Activated B cell treated with CpG ODN at 0.5 μM for 24 hours (primary cell): ENCODE measurements at regions of chr22 and their contacts with region 1.

Region 1: DNA sequence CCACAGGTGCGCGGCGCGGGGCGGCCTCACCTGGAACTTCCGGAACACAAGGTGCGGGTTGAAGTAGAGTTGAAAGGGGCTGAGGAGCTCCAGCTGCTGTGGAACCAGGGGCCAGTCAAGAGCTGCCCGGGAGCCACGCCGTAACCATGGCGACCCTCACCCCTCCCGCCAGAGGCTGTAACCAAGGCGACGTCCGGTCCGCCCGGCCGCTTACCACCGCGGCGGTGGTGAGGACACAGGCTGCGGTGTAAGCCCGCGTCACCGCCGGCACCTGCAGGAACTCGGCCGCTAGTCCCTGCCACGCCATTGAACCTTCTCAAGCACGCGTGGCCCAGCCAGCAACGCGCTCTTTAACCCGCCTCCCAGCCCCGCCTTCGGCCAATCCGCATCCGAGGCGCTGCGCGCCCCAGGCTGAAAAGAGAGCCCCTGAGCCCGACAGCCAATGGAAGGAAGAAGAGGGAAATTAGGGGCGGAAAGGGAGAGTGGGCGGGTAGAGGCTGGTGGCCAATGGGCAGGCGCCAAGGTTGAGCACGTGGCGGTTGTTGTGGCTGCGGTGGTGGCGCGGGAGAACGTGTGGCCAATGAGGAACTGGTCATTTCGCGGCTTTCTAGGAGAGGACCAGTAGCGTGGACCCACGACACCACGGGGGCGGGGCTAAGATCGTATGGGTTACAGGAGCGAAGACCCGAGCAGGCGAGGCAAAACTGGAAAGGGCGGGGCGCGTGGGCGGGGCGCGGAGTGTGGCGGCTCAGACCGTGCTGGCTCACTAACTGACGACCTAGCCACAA is at the start of gene DERL3:
- DNase-seq: peak; percentile 95
- ATAC-seq: peak; percentile 82
- H3K4me3 Mint-ChIP-seq: peak within 1 kb of the TSS; percentile 88
- H3K27ac Mint-ChIP-seq: peak within 1 kb of the TSS; percentile 95
- H3K4me1 Mint-ChIP-seq: peaks cover 75% of the 10 kb centered on the region
- H3K27me3 Mint-ChIP-seq: no peaks in the 10 kb centered on the region
- CTCF ChIP-seq: no peak
- total RNA-seq, gene DERL3: 15.4 and 18.3 TPM in 2 replicates

Region 2: GRCh38 chr22:23696326-23696851 is 142.5 kb before region 1 on chr22:
- CTCF ChIA-PET with region 1: no interaction called
- POLR2A ChIA-PET with region 1: no interaction called
- intact Hi-C with region 1: loop called (anchors 2 kb)
- DNase-seq: peak; percentile 52
- ATAC-seq: peak; percentile 99
- H3K4me3 Mint-ChIP-seq: peak overlapping the region; percentile 75
- H3K27ac Mint-ChIP-seq: peak overlapping the region; percentile 95
- H3K4me1 Mint-ChIP-seq: peaks cover 27% of the 10 kb centered on the region
- H3K27me3 Mint-ChIP-seq: no peaks in the 10 kb centered on the region
- CTCF ChIP-seq: no peak

Region 3: DNA sequence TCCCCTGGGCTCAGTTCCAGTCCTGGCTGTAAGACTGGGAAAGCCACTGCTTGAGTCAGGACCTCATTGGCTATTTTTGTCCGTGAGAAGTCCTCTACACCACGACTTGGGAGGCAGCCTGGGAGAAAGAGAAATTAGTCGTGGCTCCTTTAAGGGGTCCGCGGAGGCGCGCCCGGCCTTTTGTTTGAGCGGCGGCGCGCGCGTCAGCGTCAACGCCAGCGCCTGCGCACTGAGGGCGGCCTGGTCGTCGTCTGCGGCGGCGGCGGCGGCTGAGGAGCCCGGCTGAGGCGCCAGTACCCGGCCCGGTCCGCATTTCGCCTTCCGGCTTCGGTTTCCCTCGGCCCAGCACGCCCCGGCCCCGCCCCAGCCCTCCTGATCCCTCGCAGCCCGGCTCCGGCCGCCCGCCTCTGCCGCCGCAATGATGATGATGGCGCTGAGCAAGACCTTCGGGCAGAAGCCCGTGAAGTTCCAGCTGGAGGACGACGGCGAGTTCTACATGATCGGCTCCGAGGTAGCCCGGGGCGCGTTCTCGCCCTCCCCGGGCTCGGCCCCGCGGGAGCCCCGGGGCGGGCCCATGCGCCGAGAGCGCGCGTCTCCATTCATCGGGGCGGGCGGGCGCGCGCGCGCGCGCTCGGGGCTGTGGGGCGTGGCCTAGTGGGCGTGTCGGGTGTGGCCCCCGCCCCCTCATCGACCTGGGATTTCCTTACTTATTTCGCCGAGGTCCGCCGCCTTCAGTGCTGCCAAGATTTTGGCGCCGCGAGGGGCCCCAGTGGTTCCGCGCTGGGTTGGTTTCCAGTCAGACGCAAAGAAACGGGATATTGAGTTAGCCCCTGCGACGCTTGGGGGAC is 51.9 kb before region 1 on chr22 and contains the start of gene SMARCB1:
- CTCF ChIA-PET with region 1: no interaction called
- POLR2A ChIA-PET with region 1: interaction called, 6 read pairs
- intact Hi-C with region 1: loop called (anchors 1 kb)
- DNase-seq: peak; percentile 89
- ATAC-seq: peak; percentile 85
- H3K4me3 Mint-ChIP-seq: peak within 1 kb of the TSS; percentile 90
- H3K27ac Mint-ChIP-seq: peak within 1 kb of the TSS; percentile 88
- H3K4me1 Mint-ChIP-seq: peaks cover 51% of the 10 kb centered on the region
- H3K27me3 Mint-ChIP-seq: no peaks in the 10 kb centered on the region
- CTCF ChIP-seq: no peak
- total RNA-seq, gene SMARCB1: 156 and 161 TPM in 2 replicates

Region 4: GRCh38 chr22:23820748-23821211 is 18.1 kb before region 1 on chr22:
- CTCF ChIA-PET with region 1: no interaction called
- POLR2A ChIA-PET with region 1: interaction called, 3 read pairs
- intact Hi-C with region 1: loop called (anchors 2 kb)
- DNase-seq: no peak
- ATAC-seq: peak; percentile 49
- H3K4me3 Mint-ChIP-seq: peak overlapping the region; percentile 58
- H3K27ac Mint-ChIP-seq: peak overlapping the region; percentile 83
- H3K4me1 Mint-ChIP-seq: peaks cover 59% of the 10 kb centered on the region
- H3K27me3 Mint-ChIP-seq: no peaks in the 10 kb centered on the region
- CTCF ChIP-seq: no peak

Region 5: DNA sequence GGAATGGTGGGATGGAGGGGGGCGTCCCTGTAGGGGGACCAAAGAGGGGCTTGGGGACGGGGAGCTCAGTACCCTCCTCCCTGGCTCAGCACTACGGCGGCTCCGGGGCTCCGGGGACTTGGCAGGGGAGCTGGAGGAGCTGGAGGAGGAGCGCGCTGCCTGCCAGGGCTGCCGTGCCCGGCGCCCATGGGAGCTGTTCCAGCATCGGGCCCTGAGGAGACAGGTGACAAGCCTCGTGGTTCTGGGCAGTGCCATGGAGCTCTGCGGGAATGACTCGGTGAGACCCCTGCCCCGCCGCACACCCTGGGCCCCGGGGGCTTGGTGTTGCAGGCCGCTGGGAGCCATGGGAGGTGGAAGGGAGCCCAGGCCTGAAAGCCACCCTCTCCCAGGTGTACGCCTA is 43.5 kb after region 1 on chr22:
- CTCF ChIA-PET with region 1: no interaction called
- POLR2A ChIA-PET with region 1: no interaction called
- intact Hi-C with region 1: no loop called
- DNase-seq: no peak
- ATAC-seq: no peak
- H3K4me3 Mint-ChIP-seq: no peak overlapping the region
- H3K27ac Mint-ChIP-seq: no peak overlapping the region
- H3K4me1 Mint-ChIP-seq: no peaks in the 10 kb centered on the region
- H3K27me3 Mint-ChIP-seq: no peaks in the 10 kb centered on the region
- CTCF ChIP-seq: no peak

Region 6: DNA sequence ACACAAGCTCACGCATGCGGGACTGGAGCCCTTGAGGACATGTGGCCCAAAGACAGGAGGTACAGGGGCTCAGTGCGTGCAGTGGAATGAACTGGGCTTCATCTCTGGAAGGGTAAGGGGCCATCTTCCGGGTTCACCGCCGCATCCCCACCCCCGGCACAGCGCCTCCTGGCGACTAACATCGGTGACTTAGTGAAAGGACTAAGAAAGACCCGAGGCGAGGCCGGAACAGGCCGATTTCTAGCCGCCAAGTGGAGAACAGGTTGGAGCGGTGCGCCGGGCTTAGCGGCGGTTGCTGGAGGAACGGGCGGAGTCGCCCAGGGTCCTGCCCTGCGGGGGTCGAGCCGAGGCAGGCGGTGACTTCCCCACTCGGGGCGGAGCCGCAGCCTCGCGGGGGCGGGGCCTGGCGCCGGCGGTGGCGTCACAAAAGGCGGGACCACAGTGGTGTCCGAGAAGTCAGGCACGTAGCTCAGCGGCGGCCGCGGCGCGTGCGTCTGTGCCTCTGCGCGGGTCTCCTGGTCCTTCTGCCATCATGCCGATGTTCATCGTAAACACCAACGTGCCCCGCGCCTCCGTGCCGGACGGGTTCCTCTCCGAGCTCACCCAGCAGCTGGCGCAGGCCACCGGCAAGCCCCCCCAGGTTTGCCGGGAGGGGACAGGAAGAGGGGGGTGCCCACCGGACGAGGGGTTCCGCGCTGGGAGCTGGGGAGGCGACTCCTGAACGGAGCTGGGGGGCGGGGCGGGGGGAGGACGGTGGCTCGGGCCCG is 55.3 kb after region 1 on chr22 and contains the start of gene MIF:
- CTCF ChIA-PET with region 1: no interaction called
- POLR2A ChIA-PET with region 1: interaction called, 5 read pairs
- intact Hi-C with region 1: loop called (anchors 2 kb)
- DNase-seq: peak; percentile 100
- ATAC-seq: peak; percentile 88
- H3K4me3 Mint-ChIP-seq: peak within 1 kb of the TSS; percentile 96
- H3K27ac Mint-ChIP-seq: peak within 1 kb of the TSS; percentile 96
- H3K4me1 Mint-ChIP-seq: peaks cover 25% of the 10 kb centered on the region
- H3K27me3 Mint-ChIP-seq: no peaks in the 10 kb centered on the region
- CTCF ChIP-seq: peak; percentile 44
- total RNA-seq, gene MIF: 308 and 349 TPM in 2 replicates